ENCODE measurements at regions of chr1 and their contacts with region 1.

Region 1: DNA sequence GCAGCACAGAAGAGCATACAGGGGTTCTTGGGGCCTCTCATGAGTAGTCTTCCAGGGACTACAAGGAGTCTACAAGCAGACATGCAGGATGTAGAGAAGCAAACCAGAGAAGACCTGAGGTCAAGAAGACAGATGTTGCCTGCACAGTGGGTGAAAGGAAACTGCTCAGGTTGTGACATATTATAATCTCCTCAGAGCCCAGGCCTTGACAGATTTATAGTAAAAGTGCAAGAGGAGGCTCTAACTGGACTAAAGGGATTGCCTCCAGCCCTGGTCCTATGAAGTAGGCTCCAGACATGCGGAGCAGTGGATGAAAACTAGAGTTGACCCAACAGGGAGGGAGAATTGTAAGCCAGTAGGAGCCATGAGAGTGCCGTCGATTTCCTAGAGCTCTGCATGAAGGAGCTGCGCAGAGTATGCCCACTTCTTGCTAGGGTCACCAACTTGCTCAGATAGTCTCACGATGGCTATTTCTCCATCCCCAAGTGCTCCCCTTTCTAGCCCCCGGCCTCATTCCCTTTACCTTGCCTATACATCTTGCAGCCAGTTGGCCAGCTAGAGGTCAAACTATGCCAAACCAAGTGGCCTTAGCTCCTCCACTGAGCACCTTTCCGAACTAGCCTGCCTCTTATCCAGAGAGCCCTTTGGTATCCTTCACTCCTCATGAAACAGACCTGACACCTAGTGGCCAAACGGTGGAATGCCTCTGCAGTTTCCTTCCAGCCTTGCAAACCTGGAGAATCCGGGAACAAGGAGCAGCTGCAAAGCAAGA is 36.2 kb upstream of the IPO9 start:
- DNase-seq: peak; percentile 63 to 95 (median 88)

Region 2: DNA sequence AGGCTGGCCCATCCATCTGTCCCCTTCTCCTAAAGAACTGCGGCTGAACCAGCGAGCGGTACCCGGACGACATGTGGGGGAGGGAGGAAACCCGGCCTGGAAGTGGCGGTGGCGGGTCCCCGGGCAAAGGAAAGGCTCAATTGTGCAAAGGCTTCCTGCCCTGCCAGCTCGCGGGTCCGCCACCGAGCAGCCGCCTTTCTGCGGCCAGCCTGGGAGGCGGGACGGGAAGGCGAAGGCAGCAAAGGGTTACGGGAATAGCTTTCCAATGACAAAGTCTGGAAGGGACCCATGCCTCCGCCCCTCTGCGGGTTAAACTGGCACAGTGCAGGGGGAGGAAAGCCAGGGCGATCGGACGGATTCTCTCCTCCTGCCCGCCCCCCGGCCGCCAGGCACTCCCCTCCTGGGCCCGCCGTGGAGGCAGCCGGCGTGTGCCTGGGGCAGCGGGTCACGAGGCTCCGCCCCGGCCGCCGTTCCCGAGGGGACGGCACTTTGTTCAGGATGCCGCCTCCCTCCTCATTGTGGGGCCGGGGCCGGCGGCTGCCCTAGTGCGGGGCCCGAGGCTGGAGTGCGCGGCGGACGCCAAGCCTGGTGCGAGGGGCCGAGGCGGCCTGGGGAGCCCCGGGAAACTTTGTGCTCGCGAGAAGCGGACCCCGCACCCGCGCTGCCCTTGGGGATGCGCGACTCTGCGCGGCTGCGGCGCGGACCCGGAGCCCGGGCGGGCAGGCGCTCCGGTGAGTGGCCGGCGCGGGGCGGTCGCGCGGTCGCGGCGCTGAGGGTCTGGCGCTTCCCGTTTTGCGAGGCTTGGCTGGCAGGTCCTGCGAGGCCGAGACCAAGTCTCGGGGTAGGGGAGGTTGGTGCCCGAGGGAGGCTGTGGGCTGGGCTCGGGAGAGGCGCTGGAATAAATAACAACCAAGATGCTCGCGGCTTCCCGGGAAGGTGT is 253.8 kb before region 1 on chr1 and contains the start of gene NAV1:
- intact Hi-C with region 1: loop called (anchors 5 kb)
- DNase-seq: peak; percentile 41 to 91 (median 76)

Region 3: DNA sequence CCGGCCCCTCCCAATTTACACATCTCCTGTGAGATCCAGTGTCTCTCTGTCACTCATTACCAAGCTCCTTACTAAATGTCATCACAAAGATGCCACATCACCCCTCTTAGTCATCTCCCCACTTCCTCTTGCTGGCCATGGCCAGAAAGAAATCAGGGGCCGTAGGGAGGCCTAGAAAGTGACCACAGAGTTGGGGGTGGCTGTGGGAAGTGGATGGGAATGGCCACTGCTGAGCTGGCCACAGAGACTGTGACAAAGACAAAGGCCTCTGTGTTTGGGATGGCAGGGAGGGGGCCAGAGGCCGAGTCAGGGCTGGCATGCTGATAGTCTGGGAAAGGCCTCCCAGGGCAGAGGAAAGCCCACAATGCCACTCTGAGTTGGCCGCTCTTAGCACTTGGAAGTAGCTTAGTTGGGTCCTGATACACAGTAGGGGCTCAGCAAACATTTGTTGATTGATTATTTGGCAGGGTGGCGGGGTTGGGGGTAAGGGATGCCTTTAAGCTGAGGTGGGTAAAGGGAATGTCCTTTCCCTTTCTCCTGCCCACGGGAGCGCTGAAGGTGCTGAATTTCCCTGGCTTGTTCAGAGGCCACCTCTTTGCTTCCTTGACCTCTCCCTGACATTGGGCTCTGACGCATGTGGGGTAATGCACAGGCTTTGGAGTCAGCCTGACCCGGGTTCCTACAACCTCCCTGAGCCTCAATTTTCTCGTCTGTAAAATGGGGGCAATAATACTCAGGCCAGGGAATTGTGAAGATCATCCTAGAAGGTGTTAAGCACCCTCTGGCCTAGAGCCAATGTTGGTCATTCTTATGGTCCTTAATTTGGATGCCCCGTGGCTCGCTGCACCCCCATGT is 240.6 kb before region 1 on chr1:
- intact Hi-C with region 1: loop called (anchors 5 kb)
- DNase-seq: peak; percentile 74 to 97 (median 91)

Region 4: DNA sequence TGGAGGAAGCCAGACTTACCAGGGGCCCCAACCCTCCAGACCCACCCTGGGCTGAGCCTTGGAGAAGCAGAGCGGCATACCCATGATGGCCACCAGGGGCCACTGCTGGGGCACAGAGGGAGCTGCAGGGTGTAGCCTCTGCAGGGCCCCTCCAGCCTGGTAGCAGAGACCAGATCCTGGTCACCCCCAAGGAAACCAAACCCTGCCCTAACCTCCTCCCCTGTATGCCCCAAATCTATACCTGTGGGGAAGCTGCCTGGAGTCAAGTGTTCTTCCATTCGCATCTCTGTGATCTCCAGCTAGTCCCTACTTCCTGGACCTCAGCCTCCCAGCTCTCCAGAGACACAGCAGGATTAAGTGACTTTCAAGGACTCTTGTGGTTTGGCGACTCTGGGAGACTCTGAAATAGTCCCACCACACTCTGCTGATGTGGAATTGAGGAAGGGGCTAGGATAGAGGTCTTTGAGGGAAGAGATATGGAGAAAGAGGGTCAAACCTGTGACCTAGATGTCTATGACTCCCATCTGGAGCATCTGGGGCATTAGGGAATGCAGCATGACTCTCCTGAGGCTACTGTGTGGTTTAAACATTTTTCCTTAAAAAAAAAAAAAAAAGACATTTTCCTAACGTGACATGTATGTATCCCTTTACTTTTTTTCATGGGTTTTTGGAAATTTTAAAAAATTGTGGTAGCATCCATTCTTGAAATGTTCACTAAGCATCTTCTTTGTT is 83.0 kb before region 1 on chr1:
- intact Hi-C with region 1: loop called (anchors 2 kb)
- DNase-seq: peak; percentile 60 to 95 (median 86)